SK-N-SH (cell line): ENCODE measurements at regions of chr7 and their contacts with region 1.

Region 1: DNA sequence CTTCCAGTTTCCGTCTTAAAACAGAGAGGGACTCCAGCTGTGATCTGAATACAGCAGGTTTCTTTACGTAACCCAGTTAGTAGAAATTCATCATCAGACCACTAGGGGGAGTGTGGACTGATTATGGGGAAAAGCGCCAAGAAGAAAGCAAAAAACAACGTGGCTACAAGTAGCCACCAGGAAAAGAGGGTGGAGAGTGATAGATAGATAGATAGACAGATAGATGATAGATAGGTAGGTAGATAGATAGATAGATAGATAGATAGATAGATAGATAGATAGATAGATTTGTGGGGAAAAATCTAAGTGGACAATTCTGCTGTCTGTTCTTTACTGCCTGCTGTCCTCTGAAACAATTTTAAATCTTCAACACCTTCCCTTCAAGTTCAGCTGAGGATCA is 12.7 kb upstream of the AKR1B10 start:
- DNase-seq: peak; percentile 68
- H3K4me3 ChIP-seq: no peak overlapping the region
- H3K27ac ChIP-seq: no peak overlapping the region
- H3K4me1 ChIP-seq: peaks cover 0 to 6% of the 10 kb centered on the region in 2 experiments; a peak in 1 of 4 replicates
- H3K27me3 ChIP-seq: 0 out of 2 replicates have a peak, but pooled peaks cover 16% of the 10 kb centered on the region
- CTCF ChIP-seq: peak; percentile 98
- EP300 ChIP-seq: no peak
- RAD21 ChIP-seq: peak; percentile 66

Region 2: DNA sequence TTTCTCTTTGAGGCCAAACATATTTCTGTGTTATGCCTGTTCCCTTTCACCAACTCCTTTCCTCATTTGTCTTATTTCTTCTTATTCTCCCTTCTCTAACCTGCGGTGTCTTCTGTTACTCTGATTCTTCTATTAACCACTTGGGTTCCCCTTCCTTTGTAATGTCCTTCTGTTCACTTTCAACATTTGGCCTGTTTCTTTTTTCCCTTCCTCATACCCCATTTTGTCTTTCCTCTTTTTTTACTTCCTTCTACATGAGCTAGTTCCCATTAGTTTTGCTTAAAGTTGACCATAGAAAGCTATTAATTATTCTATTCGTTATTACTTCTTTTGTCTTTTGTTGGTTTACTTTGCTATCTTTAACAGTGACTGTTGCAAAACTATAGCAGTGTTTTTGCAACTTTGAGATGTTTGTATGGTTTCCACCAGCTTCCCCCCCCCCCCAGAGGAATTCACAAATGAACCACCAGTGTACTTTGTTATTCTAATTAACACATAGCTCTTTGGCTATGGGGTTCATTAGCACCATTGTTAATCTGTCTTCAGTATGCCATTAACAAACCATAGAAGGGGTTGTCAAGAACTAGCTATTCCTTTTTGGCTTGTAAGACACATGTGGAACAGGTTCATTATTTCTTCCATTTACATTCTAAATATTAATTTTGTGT is 384.7 kb before region 1 on chr7:
- CTCF ChIA-PET with region 1: no interaction called
- POLR2A ChIA-PET with region 1: no interaction called
- DNase-seq: no peak
- H3K4me3 ChIP-seq: no peak overlapping the region
- H3K27ac ChIP-seq: no peak overlapping the region
- H3K4me1 ChIP-seq: peaks cover 0 to 16% of the 10 kb centered on the region in 2 experiments; a peak in 2 of 4 replicates
- H3K27me3 ChIP-seq: no peaks in the 10 kb centered on the region
- CTCF ChIP-seq: no peak
- EP300 ChIP-seq: no peak
- RAD21 ChIP-seq: no peak

Region 3: GRCh38 chr7:134458806-134459698 is 55.6 kb before region 1 on chr7 and contains the start of gene AKR1B1:
- CTCF ChIA-PET with region 1: interaction called, 67 read pairs
- POLR2A ChIA-PET with region 1: no interaction called
- DNase-seq: peak; percentile 99
- H3K4me3 ChIP-seq: peak within 1 kb of the TSS; percentile 90 to 92
- H3K27ac ChIP-seq: peak within 1 kb of the TSS; percentile 62 to 77
- H3K4me1 ChIP-seq: peaks cover 5 to 11% of the 10 kb centered on the region in 2 experiments; a peak in 3 of 4 replicates
- H3K27me3 ChIP-seq: no peaks in the 10 kb centered on the region
- CTCF ChIP-seq: peak; percentile 80
- EP300 ChIP-seq: peak in 1 of 2 experiments; percentile 11; a peak in 1 of 4 replicates
- RAD21 ChIP-seq: no peak
- polyA plus RNA-seq, gene AKR1B1: 216 and 224 TPM in 2 replicates

Region 4: DNA sequence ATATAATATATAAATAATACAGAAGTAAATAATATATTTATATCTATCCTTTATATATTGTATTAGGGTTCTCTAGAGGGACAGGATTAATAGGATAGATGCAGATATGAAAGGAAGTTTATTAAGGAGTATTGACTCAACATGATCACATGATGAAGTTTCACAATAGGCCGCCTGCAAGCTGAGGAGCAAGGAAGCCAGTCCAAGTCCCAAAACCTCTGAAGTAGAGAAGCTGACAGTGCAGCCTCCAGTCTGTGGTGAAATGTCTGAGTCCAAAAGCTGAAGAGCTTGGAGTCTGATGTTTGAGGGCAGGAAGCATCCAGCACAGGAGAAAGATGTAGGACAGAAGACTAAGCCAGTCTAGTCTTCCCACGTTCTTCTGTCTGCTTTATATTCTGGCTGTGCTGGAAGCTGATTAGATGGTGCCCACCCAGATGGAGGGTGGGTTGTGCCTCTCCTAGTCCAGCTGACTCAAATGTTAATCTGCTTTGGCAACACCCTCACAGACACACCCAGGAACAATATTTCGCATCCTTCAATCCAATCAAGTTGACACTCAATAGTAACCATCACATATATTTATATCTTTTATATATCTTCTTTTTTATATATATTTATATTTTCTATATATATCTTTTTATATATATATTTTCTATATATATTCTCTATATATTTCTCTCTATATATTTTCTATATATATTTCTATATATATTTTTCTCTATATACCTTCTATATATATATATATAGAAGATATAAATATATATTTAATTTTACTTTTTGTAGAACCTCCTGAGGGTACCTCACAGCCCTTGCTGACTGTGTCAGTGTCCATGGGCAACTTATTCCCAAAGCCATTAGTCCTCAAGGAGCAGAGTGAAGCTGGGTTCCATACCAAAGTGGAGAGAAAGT is 11.9 kb before region 1 on chr7:
- CTCF ChIA-PET with region 1: interaction called, 20 read pairs
- POLR2A ChIA-PET with region 1: no interaction called
- DNase-seq: no peak
- H3K4me3 ChIP-seq: no peak overlapping the region
- H3K27ac ChIP-seq: no peak overlapping the region
- H3K4me1 ChIP-seq: no peaks in the 10 kb centered on the region
- H3K27me3 ChIP-seq: peaks cover 5% of the 10 kb centered on the region; the same call in 1 of the 2 replicates
- CTCF ChIP-seq: no peak
- EP300 ChIP-seq: no peak
- RAD21 ChIP-seq: no peak

Region 5: DNA sequence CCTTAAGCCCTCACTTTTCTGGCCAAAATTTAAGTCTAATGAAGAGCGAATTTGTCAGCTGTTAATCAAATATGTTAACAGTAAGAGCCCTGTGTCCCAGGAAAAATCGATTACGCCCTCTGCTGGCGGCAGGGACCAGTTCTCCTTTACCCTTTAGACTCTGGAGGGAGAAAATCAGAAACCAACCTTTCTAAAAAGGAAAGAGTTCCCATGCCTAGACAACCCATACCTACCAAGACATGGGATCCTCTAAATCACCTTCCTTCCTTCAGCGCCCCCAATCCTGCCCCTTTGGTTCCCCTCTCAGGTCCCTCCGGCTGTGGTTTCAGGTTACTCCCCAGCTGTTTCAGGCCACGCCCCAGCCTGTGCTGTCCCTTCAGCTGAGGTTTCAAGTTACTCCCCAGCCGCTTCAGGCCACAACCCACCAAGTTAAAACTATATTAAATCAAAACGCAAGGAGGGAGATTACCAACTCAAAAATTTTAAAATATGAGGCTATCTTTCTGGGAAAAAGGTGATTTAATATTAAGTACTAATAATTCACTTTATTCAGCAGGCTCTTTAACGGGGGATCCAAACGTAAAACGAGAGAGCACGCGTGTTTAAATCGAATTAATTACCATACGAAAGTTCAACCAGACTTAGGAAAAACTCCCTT is 32.9 kb after region 1 on chr7:
- CTCF ChIA-PET with region 1: interaction called, 28 read pairs
- POLR2A ChIA-PET with region 1: no interaction called
- DNase-seq: peak; percentile 60
- H3K4me3 ChIP-seq: peak overlapping the region; percentile 37 to 57
- H3K27ac ChIP-seq: no peak overlapping the region
- H3K4me1 ChIP-seq: peaks cover 0 to 4% of the 10 kb centered on the region in 2 experiments; a peak in 1 of 4 replicates
- H3K27me3 ChIP-seq: peaks cover 57% of the 10 kb centered on the region
- CTCF ChIP-seq: peak; percentile 100
- EP300 ChIP-seq: no peak
- RAD21 ChIP-seq: peak; percentile 68

Region 6: DNA sequence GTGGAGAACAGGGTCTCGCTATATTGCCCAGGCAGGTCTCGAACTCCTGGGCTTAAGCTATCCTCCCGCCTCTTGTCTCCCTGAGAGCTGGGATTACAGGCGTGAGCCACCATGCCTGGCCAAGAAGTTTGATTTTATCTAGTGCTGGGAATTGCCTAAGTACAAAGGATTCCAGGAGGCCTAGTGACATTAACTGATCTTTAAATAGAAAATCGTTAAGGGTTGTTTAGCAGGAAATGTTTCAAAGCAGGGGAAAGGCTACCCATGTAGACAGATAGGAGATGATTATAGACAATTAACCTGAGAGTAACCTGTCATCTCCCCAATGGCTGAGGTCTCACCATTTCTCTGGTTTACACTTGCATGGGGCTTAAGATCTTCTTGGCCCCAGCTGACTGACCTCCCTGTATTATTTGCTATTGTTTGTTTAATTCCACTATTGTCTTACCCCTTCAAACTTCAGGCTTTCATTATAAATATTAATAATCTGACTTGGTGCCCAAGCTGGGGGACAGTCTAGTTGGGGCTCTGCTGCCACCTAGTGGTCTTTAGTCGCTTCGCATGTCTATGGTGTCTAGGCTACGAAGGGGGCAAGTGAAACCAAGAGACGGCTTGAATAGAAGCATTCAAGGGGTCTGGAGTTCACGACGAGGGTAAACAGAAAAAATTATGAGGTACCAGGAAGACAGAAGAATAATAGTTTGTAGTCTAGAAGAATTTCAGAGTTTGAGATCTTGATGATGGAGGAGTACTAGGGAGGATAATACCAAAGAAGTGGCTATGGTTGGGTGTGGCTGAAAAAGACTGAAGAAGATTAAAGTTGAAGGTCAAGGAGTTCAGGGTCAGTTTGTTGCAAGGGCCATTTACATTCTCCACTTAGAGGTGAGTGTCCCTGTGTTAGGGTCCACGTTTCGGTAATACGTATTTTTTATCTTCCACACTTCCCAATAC is 91.6 kb after region 1 on chr7:
- CTCF ChIA-PET with region 1: interaction called, 79 read pairs
- POLR2A ChIA-PET with region 1: no interaction called
- DNase-seq: peak; percentile 66
- H3K4me3 ChIP-seq: peak overlapping the region in 1 of 2 experiments; percentile 16; a peak in 1 of 4 replicates
- H3K27ac ChIP-seq: no peak overlapping the region; a peak in 1 of 4 replicates
- H3K4me1 ChIP-seq: no peaks in the 10 kb centered on the region; a peak in 2 of 4 replicates
- H3K27me3 ChIP-seq: no peaks in the 10 kb centered on the region
- CTCF ChIP-seq: peak; percentile 100
- EP300 ChIP-seq: no peak
- RAD21 ChIP-seq: peak; percentile 92